ENCODE measurements at regions of chr2 and their contacts with region 1.

Region 1: DNA sequence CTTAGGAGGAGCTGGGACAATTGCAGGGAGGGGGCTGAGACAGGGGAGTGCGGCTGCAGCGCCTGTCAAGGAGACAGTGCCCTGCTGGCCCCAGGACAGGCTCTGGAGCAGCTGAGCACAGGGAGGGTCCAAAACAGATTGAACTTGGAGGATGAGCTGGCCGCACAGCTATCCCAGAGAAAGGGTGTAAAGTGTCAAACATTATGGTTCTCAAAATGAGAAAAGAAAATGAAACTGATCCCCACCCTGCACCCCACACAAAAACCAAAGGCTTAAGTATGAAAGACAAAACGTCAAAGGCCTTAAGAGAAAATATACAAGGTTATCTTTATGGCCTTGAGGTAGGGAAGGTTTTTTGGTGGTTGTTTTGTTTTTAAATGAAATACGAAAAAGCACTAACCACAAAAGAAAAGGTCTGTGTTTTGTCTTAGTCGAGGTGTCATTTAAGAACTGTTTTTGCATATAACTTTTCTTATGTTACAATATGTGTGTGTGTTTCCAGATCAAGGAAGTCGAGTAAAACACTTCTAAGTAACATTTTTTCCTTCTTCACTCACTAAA is 111.8 kb downstream of the HDAC4 start:
- DNase-seq: peak; percentile 68
- H3K4me3 Mint-ChIP-seq: peak overlapping the region; percentile 45
- H3K27ac Mint-ChIP-seq: peak overlapping the region; percentile 86
- H3K4me1 Mint-ChIP-seq: peaks cover 76% of the 10 kb centered on the region
- H3K27me3 Mint-ChIP-seq: peaks cover 13% of the 10 kb centered on the region

Region 2: DNA sequence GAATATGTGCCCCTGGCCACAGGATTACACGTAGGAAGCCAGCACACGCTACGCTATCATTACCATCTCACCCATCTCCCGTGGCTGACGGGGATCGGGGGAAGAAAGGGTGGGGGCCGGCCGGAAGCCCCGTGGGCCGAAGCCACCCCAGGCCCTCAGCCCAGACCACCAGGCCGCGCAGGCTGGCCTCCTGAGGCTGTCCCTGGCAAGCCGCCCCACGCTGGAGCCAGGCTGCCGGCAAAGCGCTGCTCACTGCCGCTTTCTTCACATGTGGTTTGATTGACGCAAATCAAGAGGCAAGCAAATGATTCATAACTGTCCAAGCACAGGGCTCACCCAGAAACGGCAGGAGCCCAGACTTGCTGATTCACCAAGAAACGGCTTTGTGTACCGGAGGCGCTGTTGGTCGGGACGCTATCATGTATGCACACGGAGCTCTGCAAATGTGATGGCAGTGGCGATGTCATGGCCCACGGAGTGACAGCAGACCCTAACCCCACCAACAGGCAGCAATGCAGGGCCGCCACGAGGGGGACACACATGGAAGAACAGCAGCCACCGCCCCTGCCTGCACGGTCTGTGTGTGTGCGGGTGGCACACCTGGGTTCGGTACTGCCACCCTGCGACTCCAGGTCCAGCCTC is 13.9 kb before region 1 on chr2:
- CTCF ChIA-PET with region 1: interaction called, 13 read pairs
- intact Hi-C with region 1: loop called (anchors 1 kb)
- DNase-seq: peak; percentile 93
- H3K4me3 Mint-ChIP-seq: peak overlapping the region; percentile 51
- H3K27ac Mint-ChIP-seq: peak overlapping the region; percentile 77
- H3K4me1 Mint-ChIP-seq: peaks cover 51% of the 10 kb centered on the region
- H3K27me3 Mint-ChIP-seq: peaks cover 24% of the 10 kb centered on the region

Region 3: GRCh38 chr2:239321596-239322415 is 32.8 kb after region 1 on chr2:
- CTCF ChIA-PET with region 1: interaction called, 5 read pairs
- intact Hi-C with region 1: loop called (anchors 1 kb)
- DNase-seq: peak; percentile 94
- H3K4me3 Mint-ChIP-seq: peak overlapping the region; percentile 55
- H3K27ac Mint-ChIP-seq: peak overlapping the region; percentile 93
- H3K4me1 Mint-ChIP-seq: peaks cover 77% of the 10 kb centered on the region
- H3K27me3 Mint-ChIP-seq: no peaks in the 10 kb centered on the region

Region 4: DNA sequence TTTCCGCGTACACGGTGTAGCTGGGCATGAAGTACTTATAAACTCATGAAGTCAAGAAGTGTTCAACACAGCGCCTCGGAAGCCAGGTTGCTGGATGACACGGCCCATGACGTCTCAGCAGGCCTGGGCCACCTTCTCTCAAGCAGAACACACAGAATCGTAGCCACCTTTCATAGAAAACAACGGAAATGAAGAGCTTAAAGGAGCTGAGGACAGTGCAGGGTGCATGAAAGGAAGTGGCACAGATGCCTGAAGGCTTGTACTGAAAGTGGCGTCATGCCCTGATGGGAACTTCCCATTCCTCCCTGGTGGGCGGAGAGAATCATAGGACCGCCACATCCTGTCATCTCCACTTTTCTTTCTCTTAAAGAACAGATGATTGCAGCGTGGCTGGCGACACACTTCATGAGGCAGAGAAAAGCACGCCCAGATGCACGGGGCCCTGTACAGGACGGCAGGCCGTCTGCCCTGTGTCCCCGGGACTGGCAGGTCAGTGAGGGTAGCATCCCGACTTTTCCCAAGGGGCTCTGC is 80.7 kb after region 1 on chr2:
- CTCF ChIA-PET with region 1: no interaction called
- intact Hi-C with region 1: loop called (anchors 1 kb)
- DNase-seq: peak; percentile 95
- H3K4me3 Mint-ChIP-seq: peak overlapping the region; percentile 76
- H3K27ac Mint-ChIP-seq: peak overlapping the region; percentile 89
- H3K4me1 Mint-ChIP-seq: peaks cover 9% of the 10 kb centered on the region
- H3K27me3 Mint-ChIP-seq: no peaks in the 10 kb centered on the region

Measured in activated naive CD4-positive, alpha-beta T cell treated with anti-CD3 and anti-CD28 coated beads for 36 hours (primary cell).